Panc1 (cell line): ENCODE measurements at regions of chr6 and their contacts with region 1.

Region 1: DNA sequence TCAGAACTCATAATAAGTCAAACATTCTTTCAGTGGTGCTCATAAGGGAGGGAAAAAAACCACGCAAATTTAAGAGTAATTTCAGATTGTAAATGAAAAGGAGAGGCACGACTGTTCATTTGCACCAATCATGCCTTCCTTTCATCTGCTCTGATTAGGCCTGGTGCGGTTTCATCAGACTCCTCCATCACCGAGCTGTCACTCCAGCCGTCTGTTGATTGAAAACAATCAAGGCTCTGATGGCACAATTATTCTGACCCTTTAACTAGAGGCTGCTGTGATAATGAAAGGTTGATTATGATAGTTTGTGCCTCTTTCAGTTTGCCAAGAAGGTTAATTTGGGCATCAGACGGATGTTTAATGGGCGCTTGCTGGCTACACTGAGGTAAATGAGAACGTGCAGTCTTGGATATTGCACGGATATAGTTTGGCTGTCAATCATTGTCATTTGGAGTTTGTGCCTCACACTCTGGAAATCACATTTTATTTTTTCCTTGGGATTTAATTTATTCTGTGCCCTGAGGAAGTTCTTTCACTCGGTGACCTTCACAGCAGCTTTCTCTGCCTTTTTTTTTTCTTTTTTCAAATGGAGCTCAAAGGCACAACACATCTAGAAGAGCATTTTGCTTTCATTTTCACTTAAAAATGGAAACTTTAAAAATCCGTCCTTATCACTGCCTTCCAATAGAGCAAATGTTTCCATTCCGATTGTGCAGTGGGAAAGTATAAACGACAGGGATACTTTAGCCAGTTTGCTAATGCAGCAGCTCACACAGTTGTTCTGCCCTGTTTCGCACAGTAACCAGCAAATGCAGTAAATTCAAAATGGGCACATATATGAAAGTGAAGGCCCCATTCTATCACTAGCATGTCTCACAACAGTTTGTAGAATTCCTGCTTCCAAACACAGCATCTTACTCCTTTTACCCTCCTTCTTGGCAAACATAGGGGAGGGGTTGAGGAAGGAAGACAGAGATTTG is 172.8 kb downstream of the KLHL32 start:
- DNase-seq: no peak
- ATAC-seq: no peak
- H3K4me3 ChIP-seq: peak overlapping the region; percentile 1 to 35; a peak in 3 of 4 replicates
- H3K27ac ChIP-seq: no peak overlapping the region
- H3K4me1 ChIP-seq: no peaks in the 10 kb centered on the region
- H3K27me3 ChIP-seq: peaks cover 2% of the 10 kb centered on the region; the same call in 1 of the 2 replicates
- CTCF ChIP-seq: no peak

Region 2: DNA sequence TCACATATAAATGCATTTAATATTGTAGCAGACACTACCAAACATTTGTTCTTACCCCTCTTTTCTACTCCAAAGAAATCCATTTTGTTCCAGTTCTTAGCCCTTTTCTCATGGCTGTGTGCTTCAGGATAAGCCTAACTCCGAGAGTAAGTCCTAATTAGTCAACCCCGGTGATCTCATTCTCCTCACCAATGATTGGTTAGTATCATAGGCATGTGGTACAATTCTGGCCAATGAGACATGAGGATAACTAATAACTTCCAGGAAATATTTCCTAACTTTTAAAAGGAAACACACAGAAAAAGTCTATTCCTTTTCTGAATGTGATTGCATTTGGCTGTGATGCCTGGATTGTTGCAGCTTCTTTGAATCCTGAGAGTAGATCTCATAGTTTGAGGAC is 376.1 kb before region 1 on chr6:
- CTCF ChIA-PET with region 1: no interaction called
- POLR2A ChIA-PET with region 1: no interaction called
- in situ Hi-C with region 1: no loop called
- intact Hi-C with region 1: no loop called
- DNase-seq: no peak
- ATAC-seq: no peak
- H3K4me3 ChIP-seq: no peak overlapping the region
- H3K27ac ChIP-seq: no peak overlapping the region
- H3K4me1 ChIP-seq: no peaks in the 10 kb centered on the region
- H3K27me3 ChIP-seq: no peaks in the 10 kb centered on the region; the same call in 1 of the 2 replicates
- CTCF ChIP-seq: no peak

Region 3: DNA sequence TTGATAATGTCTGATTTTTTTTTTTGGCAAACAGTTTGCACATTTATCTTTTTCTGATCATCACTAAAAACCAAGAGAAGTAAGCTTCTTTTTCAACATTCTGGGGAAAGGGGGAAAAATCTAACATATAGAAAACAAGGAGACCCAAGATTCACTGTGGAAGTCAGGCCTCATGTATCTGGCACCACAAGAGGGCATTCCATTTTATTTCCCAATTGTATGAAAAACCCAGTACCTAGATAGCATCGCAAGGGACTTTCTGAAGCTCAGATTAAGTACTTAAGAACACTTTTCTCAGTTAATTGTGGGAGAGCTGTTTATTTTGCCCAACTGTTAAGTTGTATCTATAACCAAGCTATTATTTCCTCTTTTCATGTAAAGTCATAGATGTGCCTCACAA is 20.0 kb before region 1 on chr6:
- CTCF ChIA-PET with region 1: no interaction called
- POLR2A ChIA-PET with region 1: no interaction called
- in situ Hi-C with region 1: no loop called
- intact Hi-C with region 1: no loop called
- DNase-seq: no peak
- ATAC-seq: no peak
- H3K4me3 ChIP-seq: no peak overlapping the region
- H3K27ac ChIP-seq: no peak overlapping the region
- H3K4me1 ChIP-seq: no peaks in the 10 kb centered on the region
- H3K27me3 ChIP-seq: no peaks in the 10 kb centered on the region; the same call in 1 of the 2 replicates
- CTCF ChIP-seq: no peak; the same call in 1 of the 2 replicates

Region 4: GRCh38 chr6:97145691-97146090 is 48.3 kb after region 1 on chr6:
- CTCF ChIA-PET with region 1: no interaction called
- POLR2A ChIA-PET with region 1: interaction called, 12 read pairs
- in situ Hi-C with region 1: no loop called
- intact Hi-C with region 1: no loop called
- DNase-seq: no peak
- ATAC-seq: no peak
- H3K4me3 ChIP-seq: no peak overlapping the region
- H3K27ac ChIP-seq: no peak overlapping the region
- H3K4me1 ChIP-seq: no peaks in the 10 kb centered on the region
- H3K27me3 ChIP-seq: no peaks in the 10 kb centered on the region
- CTCF ChIP-seq: no peak

Region 5: DNA sequence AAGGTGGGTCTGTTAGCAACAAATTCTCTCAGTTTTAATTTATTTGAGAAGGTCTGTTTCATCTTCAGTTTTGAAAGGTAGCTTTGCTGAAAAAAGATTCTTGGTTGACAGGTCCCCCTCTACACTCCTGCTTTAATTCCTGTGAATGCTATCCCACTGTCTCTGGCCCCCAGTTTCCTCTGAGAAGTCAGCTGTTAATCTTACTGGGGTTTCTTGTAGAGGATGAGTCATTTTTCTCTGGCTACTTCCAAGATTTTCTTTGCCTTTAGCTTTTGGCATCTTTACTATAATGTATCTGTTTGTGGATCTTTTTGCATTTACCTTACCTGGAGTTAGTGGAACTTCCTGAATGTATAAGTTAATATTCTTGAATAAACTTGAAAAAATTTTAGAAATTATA is 62.9 kb after region 1 on chr6:
- CTCF ChIA-PET with region 1: no interaction called
- POLR2A ChIA-PET with region 1: interaction called, 13 read pairs
- in situ Hi-C with region 1: no loop called
- intact Hi-C with region 1: no loop called
- DNase-seq: no peak
- ATAC-seq: no peak
- H3K4me3 ChIP-seq: no peak overlapping the region
- H3K27ac ChIP-seq: no peak overlapping the region
- H3K4me1 ChIP-seq: no peaks in the 10 kb centered on the region
- H3K27me3 ChIP-seq: no peaks in the 10 kb centered on the region
- CTCF ChIP-seq: no peak

Region 6: DNA sequence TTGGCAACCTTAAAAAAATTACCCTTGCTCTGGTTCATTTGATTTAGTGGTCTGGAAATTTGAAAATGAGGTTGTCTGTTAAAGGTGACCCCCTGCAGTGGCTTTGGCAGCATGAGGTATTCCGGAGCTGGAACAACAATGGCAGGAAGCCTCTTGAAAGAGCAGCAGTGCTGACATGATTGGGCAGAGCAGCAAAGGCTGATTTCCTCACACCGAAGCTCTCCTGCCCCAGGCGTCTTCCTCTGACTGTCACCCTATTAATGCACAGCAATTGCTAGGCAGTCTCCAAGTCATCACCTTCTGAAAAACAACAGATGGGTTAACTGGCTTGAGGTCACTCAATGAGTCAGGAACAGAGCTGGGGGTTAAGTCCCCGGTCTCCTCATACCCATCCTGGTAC is 427.5 kb after region 1 on chr6:
- CTCF ChIA-PET with region 1: no interaction called
- POLR2A ChIA-PET with region 1: no interaction called
- in situ Hi-C with region 1: no loop called
- intact Hi-C with region 1: no loop called
- DNase-seq: no peak
- ATAC-seq: no peak
- H3K4me3 ChIP-seq: no peak overlapping the region
- H3K27ac ChIP-seq: no peak overlapping the region
- H3K4me1 ChIP-seq: no peaks in the 10 kb centered on the region
- H3K27me3 ChIP-seq: no peaks in the 10 kb centered on the region
- CTCF ChIP-seq: no peak